Right ventricle myocardium inferior (tissue), 1 donor: ENCODE measurements at regions of chr18 and their contacts with region 1.

Region 1: GRCh38 chr18:22983175-22983574 is 50.0 kb downstream of the RBBP8 start:
- DNase-seq: no peak
- ATAC-seq: no peak

Region 2: DNA sequence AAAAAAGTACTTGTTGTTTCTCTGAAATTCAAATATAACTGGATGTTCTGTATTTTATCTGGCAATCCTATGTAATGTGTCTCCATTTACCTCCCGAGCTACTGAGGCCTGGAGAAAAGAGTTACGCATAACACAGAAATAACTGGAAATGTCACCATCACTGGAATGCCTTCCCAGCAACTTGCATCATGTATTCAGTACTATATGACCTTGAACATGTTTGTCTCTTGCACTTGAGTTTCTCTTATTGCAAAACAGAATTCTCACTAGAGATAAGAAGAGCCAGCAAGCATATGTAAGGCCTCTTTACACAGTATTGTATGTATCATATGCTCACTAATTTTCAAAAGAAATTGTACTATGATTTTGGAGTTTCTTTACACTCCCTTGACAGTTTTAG is 465.8 kb before region 1 on chr18:
- intact Hi-C with region 1: no loop called
- DNase-seq: no peak
- ATAC-seq: no peak

Region 3: DNA sequence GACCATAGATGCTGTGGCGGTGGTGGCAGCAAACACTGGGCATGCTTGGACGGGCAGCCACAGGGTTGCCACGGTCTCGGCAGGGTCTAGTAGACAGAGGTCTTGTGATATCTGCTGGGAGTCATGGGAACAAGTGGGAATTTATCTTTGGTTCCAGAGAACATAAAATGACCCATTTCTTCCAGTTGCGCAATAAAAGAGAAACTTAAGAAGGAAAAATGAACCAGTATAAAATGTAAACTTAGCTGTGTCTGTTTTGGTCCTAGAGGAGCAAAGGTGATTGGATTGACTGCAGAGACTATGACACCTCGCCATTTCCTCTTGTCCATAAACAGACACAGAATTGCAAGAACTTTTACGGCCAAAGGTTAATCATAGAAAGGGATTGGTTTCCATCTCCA is 182.6 kb before region 1 on chr18:
- intact Hi-C with region 1: loop called (anchors 5 kb)
- DNase-seq: no peak
- ATAC-seq: peak; percentile 76

Region 4: DNA sequence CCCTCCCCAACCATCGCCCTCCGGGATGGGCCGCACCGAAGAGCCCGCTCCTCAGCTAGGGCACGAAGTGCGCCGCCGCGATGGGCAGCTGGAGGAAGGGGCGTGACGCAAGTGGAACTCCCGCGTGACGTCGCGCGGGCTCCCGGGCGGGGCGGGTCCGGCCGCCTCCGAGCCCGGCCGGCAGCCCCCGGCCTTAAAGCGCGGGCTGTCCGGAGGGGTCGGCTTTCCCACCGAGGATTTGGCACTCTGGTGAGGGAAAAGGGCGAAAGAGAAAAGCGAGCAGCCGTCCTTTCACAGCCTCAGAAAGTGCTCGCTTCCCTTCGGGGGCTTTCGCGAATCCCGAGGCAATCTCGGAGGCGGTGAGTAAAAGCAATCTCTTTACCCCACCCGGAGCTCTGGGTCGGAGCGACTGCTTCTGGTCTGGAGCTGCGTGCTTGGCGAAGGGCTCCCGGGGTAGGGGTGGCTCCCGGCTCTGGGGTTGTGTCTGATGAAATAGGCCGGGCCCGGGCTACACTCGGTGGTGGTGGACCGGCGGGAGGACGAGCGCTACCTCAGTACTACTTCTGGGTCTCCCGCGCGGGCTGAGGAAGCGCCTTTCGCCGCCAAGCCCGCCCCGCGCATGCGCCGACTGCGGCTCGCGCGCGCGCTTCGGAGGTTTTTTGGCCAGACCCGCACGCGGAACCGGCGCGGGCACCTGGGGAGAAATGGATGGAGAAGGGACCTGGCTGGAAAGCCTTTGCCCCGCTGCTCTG is 49.8 kb before region 1 on chr18 and contains the start of gene RBBP8:
- intact Hi-C with region 1: loop called (anchors 2 kb)
- DNase-seq: peak; percentile 95
- ATAC-seq: peak; percentile 97
- total RNA-seq, gene RBBP8: 5.1 TPM

Region 5: GRCh38 chr18:23042133-23042532 is 59.0 kb after region 1 on chr18:
- intact Hi-C with region 1: no loop called
- DNase-seq: no peak
- ATAC-seq: no peak